ENCODE measurements at regions of chr11 and their contacts with region 1.

Region 1: GRCh38 chr11:6682936-6683861 is at the start of gene MRPL17:
- DNase-seq: peak; percentile 99 to 100 (median 100)
- H3K4me3 ChIP-seq: peak within 1 kb of the TSS; percentile 89 to 95 (median 92)
- H3K27ac ChIP-seq: peak within 1 kb of the TSS; percentile 84 to 91
- H3K4me1 ChIP-seq: peaks cover 4 to 15% (median 12%) of the 10 kb centered on the region in 3 donors
- H3K27me3 ChIP-seq: no peaks in the 10 kb centered on the region
- CTCF ChIP-seq: peak; percentile 85
- total RNA-seq, gene MRPL17: 44.0 TPM

Region 2: DNA sequence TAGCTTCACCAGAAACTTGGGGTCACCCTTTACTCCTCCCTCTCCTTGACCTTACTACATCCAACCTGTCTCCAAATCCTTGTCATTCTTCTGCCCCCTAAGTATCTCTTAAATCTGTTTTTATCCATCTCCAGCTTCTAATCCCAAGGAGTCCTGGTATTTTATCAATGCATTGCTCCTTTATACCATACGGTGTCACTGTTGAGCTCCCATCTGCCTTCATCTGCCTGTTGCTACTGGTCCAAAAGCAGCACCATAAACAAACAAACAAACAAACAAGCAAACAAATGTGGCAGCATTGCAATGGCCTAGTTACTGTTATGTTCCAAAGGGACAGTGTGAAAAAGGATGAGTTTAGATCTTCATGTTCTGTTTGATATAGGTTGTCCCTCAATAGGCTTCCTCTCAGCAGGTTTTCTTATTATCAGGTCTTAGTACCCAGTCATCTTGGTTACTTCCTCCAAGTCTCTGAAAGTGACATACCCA is 151.9 kb before region 1 on chr11:
- intact Hi-C with region 1: loop called (anchors 10 kb)
- DNase-seq: peak in 3 of 5 donors; percentile 40 to 66 (median 60)
- H3K4me3 ChIP-seq: no peak overlapping the region
- H3K27ac ChIP-seq: no peak overlapping the region
- H3K4me1 ChIP-seq: no peaks in the 10 kb centered on the region
- H3K27me3 ChIP-seq: no peaks in the 10 kb centered on the region
- CTCF ChIP-seq: peak; percentile 82

Measured in kidney (tissue), 22 donors.